Activated T-helper 2 cell treated with anti-CD3 and anti-CD28 coated beads, Interferon-gamma antibody, Interleukin-2, Interleukin-4, amounts not matched to agents 10 μg/mL and 5 μg/mL and 100 μg/mL, durations not matched to agents 14 hours and 24 hours and 36 hours (primary cell): ENCODE measurements at regions of chr11 and their contacts with region 1.

Region 1: DNA sequence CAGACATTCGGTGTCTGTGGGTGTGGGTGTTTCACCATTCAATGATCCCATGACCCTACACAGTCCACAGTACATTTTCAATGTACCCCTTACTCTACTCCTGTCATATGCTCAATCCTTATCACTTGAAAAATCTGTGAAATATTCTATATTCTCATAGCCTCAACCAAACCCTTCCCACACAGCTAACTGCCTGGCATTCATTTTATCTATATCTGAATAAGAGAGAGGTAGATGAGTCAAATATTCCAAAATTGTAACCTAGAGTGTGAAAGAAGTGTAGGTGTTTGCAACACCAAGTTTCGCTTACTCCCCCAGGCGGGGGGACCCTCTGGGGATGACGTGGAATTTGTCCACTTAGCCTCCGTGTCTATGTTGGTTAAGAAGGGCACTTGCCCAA is 354.8 kb downstream of the ETS1 start:
- DNase-seq: no peak
- H3K4me3 Mint-ChIP-seq: no peak overlapping the region
- H3K27ac Mint-ChIP-seq: peak overlapping the region; percentile 81
- H3K4me1 Mint-ChIP-seq: peaks cover 58% of the 10 kb centered on the region
- H3K27me3 Mint-ChIP-seq: no peaks in the 10 kb centered on the region

Region 2: DNA sequence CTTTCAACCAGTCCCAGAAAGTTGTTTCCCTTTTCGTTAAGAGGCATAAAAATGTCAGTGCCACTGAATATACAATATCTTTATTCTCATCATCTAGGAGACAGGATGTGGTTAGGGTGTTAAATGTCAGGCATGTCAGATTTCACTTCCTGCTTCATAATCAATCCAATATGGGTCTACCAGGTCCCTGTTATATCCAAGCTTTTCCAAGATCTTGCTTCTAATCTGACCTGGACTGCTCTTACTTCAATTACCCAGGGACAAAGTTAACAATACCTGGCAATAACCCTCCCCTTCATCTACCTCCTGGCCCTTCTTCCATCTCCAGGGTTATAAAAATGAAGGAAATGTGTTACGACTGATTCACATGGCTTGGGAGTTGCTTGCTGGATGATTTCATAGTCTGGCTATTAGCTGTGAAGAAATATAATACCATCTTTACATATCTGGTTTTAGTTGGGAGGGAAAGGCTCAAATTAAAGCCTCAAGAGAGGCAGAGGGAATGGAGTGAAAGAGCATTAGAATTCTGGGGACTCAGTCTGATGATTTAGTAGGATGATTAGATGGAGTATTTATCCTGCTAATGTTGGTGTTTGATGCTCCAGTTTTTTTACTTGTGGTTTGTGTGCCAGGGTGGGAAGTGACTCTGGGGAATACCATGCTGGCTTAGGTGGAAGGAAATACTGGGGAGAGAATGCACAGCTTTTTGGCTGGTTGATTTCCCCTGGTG is 179.5 kb before region 1 on chr11:
- intact Hi-C with region 1: loop called (anchors 5 kb)
- DNase-seq: no peak
- H3K4me3 Mint-ChIP-seq: peak overlapping the region; percentile 48
- H3K27ac Mint-ChIP-seq: peak overlapping the region; percentile 76
- H3K4me1 Mint-ChIP-seq: peaks cover 56% of the 10 kb centered on the region
- H3K27me3 Mint-ChIP-seq: no peaks in the 10 kb centered on the region

Region 3: GRCh38 chr11:128180446-128181087 is 52.0 kb before region 1 on chr11:
- intact Hi-C with region 1: loop called (anchors 1 kb)
- DNase-seq: no peak
- H3K4me3 Mint-ChIP-seq: no peak overlapping the region
- H3K27ac Mint-ChIP-seq: peak overlapping the region; percentile 44
- H3K4me1 Mint-ChIP-seq: peaks cover 61% of the 10 kb centered on the region
- H3K27me3 Mint-ChIP-seq: no peaks in the 10 kb centered on the region

Region 4: DNA sequence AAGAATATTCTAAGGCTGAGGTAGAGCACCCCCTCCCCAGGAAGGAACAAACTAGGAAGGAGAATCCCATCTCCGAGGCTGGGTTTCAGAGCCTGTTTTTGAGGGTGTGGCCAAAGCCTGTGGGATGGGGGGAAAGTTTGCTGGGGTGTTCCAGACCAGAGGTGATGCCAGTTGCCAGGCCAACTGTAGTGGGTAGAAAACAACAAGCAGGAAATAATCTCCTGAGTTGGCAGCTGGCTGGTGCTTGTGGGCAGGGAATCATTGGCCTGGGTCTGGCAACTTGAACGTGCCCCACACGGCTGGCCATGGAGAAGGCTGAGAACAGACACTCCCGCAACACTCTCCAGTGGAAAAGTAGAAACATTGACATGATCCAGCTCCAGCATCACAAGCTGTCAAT is 30.8 kb before region 1 on chr11:
- intact Hi-C with region 1: loop called (anchors 1 kb)
- DNase-seq: no peak
- H3K4me3 Mint-ChIP-seq: no peak overlapping the region
- H3K27ac Mint-ChIP-seq: peak overlapping the region; percentile 43
- H3K4me1 Mint-ChIP-seq: peaks cover 33% of the 10 kb centered on the region
- H3K27me3 Mint-ChIP-seq: no peaks in the 10 kb centered on the region

Region 5: DNA sequence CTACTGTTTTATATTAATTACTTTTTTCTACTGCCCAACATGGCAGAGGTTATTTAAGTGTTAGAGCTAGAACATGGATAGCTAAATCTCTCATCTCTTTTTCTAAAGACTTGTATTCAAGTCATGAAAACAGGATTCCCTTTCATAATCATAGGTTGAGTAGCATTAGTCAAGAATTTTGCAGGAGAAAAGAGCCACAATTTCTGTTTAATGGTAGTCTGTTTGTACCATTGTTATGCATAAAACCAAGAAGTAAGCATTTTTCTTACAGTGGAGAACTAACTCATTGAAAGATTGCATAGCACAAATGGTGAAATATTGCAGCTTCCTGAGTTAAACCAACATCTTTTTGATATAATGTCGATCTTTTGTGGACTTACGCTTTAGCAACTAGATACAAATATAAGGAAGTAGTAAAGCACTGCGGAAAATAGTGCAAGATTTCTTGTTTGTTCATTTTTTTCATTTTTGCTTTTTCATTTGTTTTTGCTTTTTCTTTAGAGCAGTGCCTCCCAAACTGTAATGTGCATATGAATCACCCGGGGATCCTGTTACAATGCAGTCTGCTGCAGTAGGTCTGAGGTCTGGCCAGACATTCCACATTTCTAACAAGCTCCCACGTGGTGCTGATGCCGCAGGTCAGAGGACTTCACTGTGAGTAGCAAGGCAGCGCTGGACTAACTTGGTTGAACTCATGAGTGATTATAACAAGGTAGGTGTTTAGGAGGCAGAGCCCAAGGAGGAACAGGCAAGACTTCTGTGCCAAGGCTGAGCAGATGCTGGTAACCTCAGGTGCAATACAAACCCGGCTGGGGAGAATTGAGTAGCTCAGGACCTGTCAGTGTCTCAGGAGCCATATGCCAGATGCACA is 350.1 kb after region 1 on chr11:
- intact Hi-C with region 1: loop called (anchors 5 kb)
- DNase-seq: no peak
- H3K4me3 Mint-ChIP-seq: no peak overlapping the region
- H3K27ac Mint-ChIP-seq: no peak overlapping the region
- H3K4me1 Mint-ChIP-seq: peaks cover 26% of the 10 kb centered on the region
- H3K27me3 Mint-ChIP-seq: peaks cover 15% of the 10 kb centered on the region

Region 6: GRCh38 chr11:128745311-128746136 is 512.9 kb after region 1 on chr11:
- intact Hi-C with region 1: loop called (anchors 5 kb)
- DNase-seq: no peak
- H3K4me3 Mint-ChIP-seq: no peak overlapping the region
- H3K27ac Mint-ChIP-seq: no peak overlapping the region
- H3K4me1 Mint-ChIP-seq: peaks cover 48% of the 10 kb centered on the region
- H3K27me3 Mint-ChIP-seq: no peaks in the 10 kb centered on the region